Natural killer cell (primary cell): ENCODE measurements at regions of chr1 and their contacts with region 1.

Region 1: GRCh38 chr1:26717017-26717491 is 21.2 kb downstream of the ARID1A start:
- DNase-seq: no peak
- ATAC-seq: no peak
- H3K4me3 ChIP-seq: no peak overlapping the region
- H3K4me3 Mint-ChIP-seq: peak overlapping the region; percentile 59
- H3K27ac ChIP-seq: no peak overlapping the region
- H3K27ac Mint-ChIP-seq: peak overlapping the region; percentile 68 to 75
- H3K4me1 ChIP-seq: peaks cover 52% of the 10 kb centered on the region
- H3K4me1 Mint-ChIP-seq: peaks cover 88 to 91% of the 10 kb centered on the region in 2 donors
- H3K27me3 ChIP-seq: no peaks in the 10 kb centered on the region
- H3K27me3 Mint-ChIP-seq: no peaks in the 10 kb centered on the region
- CTCF ChIP-seq: no peak

Region 2: GRCh38 chr1:26695356-26696118 is 21.5 kb before region 1 on chr1 and contains the start of gene ARID1A:
- intact Hi-C with region 1: loop called (anchors 2 kb)
- DNase-seq: peak; percentile 97 to 98
- ATAC-seq: peak; percentile 63 to 83 (median 68)
- H3K4me3 ChIP-seq: peak within 1 kb of the TSS; percentile 71
- H3K4me3 Mint-ChIP-seq: peak within 1 kb of the TSS; percentile 98
- H3K27ac ChIP-seq: peak within 1 kb of the TSS; percentile 84
- H3K27ac Mint-ChIP-seq: peak within 1 kb of the TSS; percentile 91 to 98
- H3K4me1 ChIP-seq: peaks cover 32% of the 10 kb centered on the region
- H3K4me1 Mint-ChIP-seq: peaks cover 37 to 40% of the 10 kb centered on the region in 2 donors
- H3K27me3 ChIP-seq: no peaks in the 10 kb centered on the region
- H3K27me3 Mint-ChIP-seq: no peaks in the 10 kb centered on the region
- CTCF ChIP-seq: no peak
- total RNA-seq, gene ARID1A: 199 to 214 (median 202) TPM

Region 3: DNA sequence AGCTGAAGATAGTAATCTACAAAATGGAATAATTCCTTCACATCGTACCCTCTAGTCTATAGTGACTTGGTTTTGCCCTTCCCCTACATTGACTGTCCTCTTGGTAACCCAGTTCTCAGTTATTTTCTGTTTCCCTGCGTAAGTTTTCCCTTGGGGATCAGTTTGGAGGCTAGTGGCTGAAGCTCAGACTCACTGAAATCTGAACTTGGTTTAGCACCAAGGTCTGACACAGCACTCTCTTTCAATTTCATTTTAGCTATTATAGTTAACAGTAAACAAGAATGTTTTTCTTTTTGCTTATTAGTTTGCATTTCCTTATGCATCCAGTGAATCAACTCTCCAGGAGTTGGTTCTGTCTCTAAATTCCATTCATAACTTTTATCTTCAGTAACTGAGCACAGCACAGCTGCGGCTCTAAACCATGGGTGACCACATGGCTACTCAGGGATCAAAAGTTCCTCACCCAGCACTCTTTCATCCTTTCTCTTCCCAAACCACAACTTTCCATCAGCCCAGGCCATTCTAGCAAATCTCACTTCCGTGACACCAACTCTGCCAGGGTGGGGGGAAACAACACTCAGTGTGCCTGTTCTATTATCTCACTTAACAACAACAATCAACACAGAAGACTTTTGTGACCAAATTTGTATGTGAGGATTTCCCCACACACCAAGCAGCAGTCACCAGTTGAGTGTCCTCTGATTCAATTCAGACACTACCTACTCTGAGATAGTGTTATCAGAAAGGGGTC is 972.5 kb after region 1 on chr1:
- intact Hi-C with region 1: no loop called
- DNase-seq: no peak
- ATAC-seq: no peak
- H3K4me3 ChIP-seq: no peak overlapping the region
- H3K4me3 Mint-ChIP-seq: no peak overlapping the region
- H3K27ac ChIP-seq: no peak overlapping the region
- H3K27ac Mint-ChIP-seq: no peak overlapping the region
- H3K4me1 ChIP-seq: no peaks in the 10 kb centered on the region
- H3K4me1 Mint-ChIP-seq: no peaks in the 10 kb centered on the region
- H3K27me3 ChIP-seq: no peaks in the 10 kb centered on the region
- H3K27me3 Mint-ChIP-seq: peaks cover 9 to 14% of the 10 kb centered on the region in 2 donors
- CTCF ChIP-seq: no peak

Region 4: DNA sequence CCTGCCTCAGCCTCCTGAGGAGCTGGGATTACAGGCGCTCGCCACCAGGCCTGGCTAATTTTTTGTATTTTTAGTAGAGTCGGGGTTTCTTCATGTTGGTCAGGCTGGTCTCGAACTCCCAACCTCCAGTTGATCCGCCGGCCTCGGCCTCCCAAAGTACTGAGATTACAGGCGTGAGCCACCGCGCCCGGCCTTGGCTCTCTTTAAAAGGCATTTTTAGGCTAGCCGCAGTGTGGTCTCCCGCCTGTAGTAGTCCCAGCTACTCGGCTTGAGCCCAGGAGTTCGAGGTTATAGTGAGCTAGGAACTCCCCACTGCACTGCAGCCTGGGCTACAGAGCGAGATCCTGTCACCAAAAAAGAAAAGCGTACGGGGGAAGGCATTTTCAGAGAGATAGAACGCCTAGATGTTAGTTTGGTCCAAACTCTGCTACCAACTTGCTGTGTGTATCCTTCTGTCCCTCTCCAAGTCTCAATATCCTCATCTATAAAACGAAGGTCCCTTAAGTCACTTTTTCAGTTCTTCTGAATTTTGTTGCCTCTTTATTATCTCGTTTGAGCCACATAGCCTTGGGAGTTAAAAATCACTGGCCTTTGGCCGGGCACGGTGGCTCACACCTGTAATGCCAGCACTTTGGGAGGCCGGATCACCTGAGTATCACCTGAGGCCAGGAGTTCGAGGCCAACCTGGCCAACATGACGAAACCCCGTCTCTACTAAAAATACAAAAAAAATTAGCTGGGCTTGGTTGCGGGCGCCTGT is 1612.5 kb after region 1 on chr1:
- intact Hi-C with region 1: no loop called
- DNase-seq: peak in 1 of 2 donors; percentile 68
- ATAC-seq: peak in 2 of 3 donors; percentile 3 to 14
- H3K4me3 ChIP-seq: peak overlapping the region; percentile 57
- H3K4me3 Mint-ChIP-seq: peak overlapping the region; percentile 97
- H3K27ac ChIP-seq: peak overlapping the region; percentile 87
- H3K27ac Mint-ChIP-seq: peak overlapping the region; percentile 97
- H3K4me1 ChIP-seq: peaks cover 26% of the 10 kb centered on the region
- H3K4me1 Mint-ChIP-seq: peaks cover 25 to 43% of the 10 kb centered on the region in 2 donors
- H3K27me3 ChIP-seq: no peaks in the 10 kb centered on the region
- H3K27me3 Mint-ChIP-seq: no peaks in the 10 kb centered on the region
- CTCF ChIP-seq: no peak